Mucosa of descending colon (tissue), 3 donors: ENCODE measurements at regions of chr11 and their contacts with region 1.

Region 1: GRCh38 chr11:46593550-46594373 is at the start of gene AMBRA1:
- DNase-seq: peak; percentile 86 to 97 (median 92)
- ATAC-seq: peak; percentile 98
- H3K4me3 ChIP-seq: peak within 1 kb of the TSS; percentile 91
- H3K4me1 ChIP-seq: peaks cover 27% of the 10 kb centered on the region
- CTCF ChIP-seq: no peak
- total RNA-seq, gene AMBRA1: 42.0 to 46.7 (median 45.2) TPM

Region 2: GRCh38 chr11:46489661-46490560 is 103.9 kb before region 1 on chr11:
- intact Hi-C with region 1: loop called in 1 of 2 experiments (anchors 10 kb)
- DNase-seq: peak in 1 of 3 donors; percentile 61
- ATAC-seq: peak; percentile 18
- H3K4me3 ChIP-seq: no peak overlapping the region
- H3K4me1 ChIP-seq: peaks cover 26% of the 10 kb centered on the region
- CTCF ChIP-seq: peak; percentile 37